HCT116 (cell line): ENCODE measurements at regions of chr1 and their contacts with region 1.

Region 1: DNA sequence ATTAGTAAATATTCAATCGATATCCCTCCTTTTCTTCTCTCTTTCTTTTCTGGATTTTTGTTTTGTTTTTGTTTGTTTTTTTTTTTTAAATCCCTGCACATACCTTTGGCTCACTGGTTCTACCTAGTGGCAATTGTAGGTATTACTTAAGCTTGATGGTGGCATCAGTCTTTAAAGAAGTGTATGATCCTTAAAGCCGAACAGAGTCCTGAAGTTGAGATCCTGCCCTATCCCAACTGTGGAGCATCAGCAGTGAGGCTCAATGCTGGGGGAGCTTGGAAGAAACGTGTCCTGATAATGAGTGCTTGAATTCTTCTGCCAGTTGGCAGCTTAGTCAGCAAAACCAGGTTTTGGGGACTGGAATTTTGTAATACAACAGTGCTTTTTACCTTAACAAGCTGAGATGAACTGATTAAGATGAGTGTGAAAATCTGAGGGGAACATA is 60.8 kb downstream of the FASLG start:
- DNase-seq: peak; percentile 39
- ATAC-seq: peak; percentile 89
- H3K4me3 ChIP-seq: no peak overlapping the region
- H3K27ac ChIP-seq: no peak overlapping the region
- H3K4me1 ChIP-seq: no peaks in the 10 kb centered on the region
- H3K27me3 ChIP-seq: no peaks in the 10 kb centered on the region
- CTCF ChIP-seq: peak; percentile 73 to 87 (median 85)
- POLR2A ChIP-seq: no peak
- RAD21 ChIP-seq: peak; percentile 92

Region 2: DNA sequence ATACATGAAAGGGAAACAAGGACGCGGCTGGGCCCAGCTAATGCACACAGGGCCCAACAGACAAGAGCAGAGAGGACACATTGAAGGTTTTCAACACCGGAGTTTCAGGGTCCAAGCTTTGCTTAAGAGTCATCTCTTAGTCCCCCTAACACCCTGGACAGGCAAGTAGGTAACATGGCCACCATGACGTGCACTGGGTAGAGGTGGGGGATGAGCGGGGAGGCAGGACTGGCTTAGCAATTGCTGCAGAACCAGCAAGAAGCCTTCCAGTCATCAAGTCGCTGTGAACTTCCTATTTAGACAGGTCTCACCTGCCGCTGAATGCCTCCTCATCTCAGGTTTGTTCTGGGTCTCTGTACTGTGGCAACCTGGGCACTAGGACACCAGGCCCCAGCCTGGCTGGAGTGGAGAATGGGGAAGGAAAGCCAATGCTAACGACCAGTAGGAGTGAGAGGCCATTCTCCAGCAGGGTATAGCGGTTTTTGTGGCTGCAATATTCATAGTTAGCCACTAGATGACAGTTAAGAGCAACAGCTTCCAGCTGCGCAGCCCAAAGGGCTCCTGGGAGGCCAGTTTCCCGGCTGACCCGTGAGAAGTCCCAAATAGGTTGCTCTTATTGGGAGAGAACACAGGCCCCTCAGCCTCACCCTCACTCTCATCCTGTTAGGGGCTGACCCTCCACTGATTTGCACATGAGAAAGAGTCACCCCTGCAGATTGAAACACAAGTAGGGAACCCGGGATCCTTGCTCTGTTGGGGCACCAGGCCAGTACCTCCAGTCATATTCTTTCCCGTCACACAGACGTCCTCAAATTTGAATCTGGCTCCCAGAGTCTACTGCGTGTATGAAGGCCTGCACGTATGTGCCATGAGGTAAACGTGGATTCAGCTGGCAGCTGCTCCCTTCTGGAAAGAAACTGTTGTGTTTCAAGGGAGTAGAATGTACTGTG is 269.9 kb before region 1 on chr1:
- CTCF ChIA-PET with region 1: interaction called, 24 read pairs
- POLR2A ChIA-PET with region 1: no interaction called
- RAD21 ChIA-PET with region 1: interaction called in 1 of 2 experiments, 3 read pairs
- intact Hi-C with region 1: loop called (anchors 1 kb)
- DNase-seq: peak; percentile 39
- ATAC-seq: peak; percentile 97
- H3K4me3 ChIP-seq: no peak overlapping the region
- H3K27ac ChIP-seq: no peak overlapping the region
- H3K4me1 ChIP-seq: peaks cover 0 to 20% of the 10 kb centered on the region in 2 experiments; a peak in 2 of 4 replicates
- H3K27me3 ChIP-seq: no peaks in the 10 kb centered on the region
- CTCF ChIP-seq: peak; percentile 83 to 88 (median 86)
- POLR2A ChIP-seq: no peak
- RAD21 ChIP-seq: peak; percentile 94

Region 3: DNA sequence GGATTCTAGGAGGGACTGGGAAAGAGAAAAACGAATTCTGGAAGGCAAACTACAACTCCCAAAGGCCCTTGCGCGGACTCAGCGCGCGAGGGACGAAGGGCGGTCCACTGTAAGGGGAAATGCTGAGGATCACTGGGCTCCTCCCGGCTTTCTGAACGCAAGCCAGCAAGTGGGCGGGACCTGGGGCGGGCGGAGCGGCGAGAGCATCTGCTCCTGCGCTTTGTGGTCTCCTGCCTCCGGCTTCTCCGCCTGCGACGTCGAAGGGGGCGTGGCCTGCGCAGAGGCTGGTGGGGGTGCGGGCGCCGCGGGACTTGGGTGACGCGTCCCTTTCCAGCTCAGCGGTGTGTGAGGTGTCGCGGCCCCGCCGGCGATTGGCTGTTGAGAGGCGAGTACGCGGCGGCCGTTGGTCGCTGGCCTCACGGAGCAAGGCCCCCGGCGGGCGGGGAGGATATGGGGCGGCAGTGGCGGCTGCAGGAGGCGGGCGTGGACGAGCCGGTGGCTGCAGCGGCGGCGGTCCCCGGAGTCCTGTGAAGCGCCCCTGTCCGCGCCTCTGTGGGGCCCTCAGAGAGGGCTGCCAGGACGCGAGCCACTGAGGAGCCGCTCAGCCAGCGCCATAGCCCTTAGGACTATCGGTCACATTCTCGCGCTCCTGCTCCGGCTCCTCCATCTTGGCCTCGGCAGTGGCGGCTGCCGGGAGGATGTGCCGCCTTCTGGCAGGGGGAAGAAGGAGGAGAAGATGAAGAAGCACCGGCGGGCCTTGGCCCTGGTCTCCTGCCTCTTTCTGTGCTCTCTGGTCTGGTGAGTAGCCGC is 186.8 kb before region 1 on chr1 and contains the start of gene SUCO:
- CTCF ChIA-PET with region 1: no interaction called
- POLR2A ChIA-PET with region 1: no interaction called
- RAD21 ChIA-PET with region 1: interaction called in 1 of 2 experiments, 3 read pairs
- intact Hi-C with region 1: loop called (anchors 5 kb)
- DNase-seq: peak; percentile 97
- ATAC-seq: peak; percentile 90
- H3K4me3 ChIP-seq: peak within 1 kb of the TSS; percentile 90
- H3K27ac ChIP-seq: peak within 1 kb of the TSS; percentile 77
- H3K4me1 ChIP-seq: peaks cover 0 to 18% of the 10 kb centered on the region in 2 experiments; a peak in 3 of 4 replicates
- H3K27me3 ChIP-seq: no peaks in the 10 kb centered on the region
- CTCF ChIP-seq: no peak
- POLR2A ChIP-seq: no peak
- RAD21 ChIP-seq: no peak
- total RNA-seq, gene SUCO: 22.6 TPM

Region 4: DNA sequence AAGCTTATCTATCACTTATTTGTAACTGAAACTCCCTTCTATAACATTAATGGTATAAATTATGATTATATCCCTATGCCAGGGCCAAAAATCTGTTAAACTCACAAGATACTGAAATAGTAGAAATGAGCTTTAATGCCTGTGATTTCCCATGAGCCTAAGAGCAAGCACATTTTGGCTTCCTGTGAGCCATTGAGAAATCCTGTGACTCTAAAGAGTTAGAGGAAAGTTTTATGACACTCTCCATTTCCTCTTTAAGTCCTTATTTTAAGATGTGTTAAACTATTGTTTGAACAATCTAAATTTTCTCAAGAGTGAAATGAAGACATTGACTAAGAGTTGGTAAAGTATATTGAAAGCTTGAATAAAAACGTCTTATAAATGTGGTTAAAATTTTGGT is 141.1 kb before region 1 on chr1:
- CTCF ChIA-PET with region 1: no interaction called
- POLR2A ChIA-PET with region 1: no interaction called
- RAD21 ChIA-PET with region 1: no interaction called
- intact Hi-C with region 1: no loop called
- DNase-seq: no peak
- ATAC-seq: no peak
- H3K4me3 ChIP-seq: no peak overlapping the region
- H3K27ac ChIP-seq: no peak overlapping the region
- H3K4me1 ChIP-seq: no peaks in the 10 kb centered on the region
- H3K27me3 ChIP-seq: no peaks in the 10 kb centered on the region
- CTCF ChIP-seq: no peak
- POLR2A ChIP-seq: no peak
- RAD21 ChIP-seq: no peak

Region 5: GRCh38 chr1:172609528-172609927 is 110.2 kb before region 1 on chr1:
- CTCF ChIA-PET with region 1: interaction called, 27 read pairs
- POLR2A ChIA-PET with region 1: no interaction called
- RAD21 ChIA-PET with region 1: no interaction called
- intact Hi-C with region 1: loop called (anchors 1 kb)
- DNase-seq: no peak
- ATAC-seq: peak; percentile 70; the same call in 1 of the 2 replicates
- H3K4me3 ChIP-seq: no peak overlapping the region
- H3K27ac ChIP-seq: no peak overlapping the region
- H3K4me1 ChIP-seq: no peaks in the 10 kb centered on the region
- H3K27me3 ChIP-seq: no peaks in the 10 kb centered on the region
- CTCF ChIP-seq: peak; percentile 37 to 53 (median 39); a peak in 5 of 6 replicates
- POLR2A ChIP-seq: no peak
- RAD21 ChIP-seq: peak; percentile 61